Heart right ventricle (tissue), 16 donors: ENCODE measurements at regions of chr7 and their contacts with region 1.

Region 1: DNA sequence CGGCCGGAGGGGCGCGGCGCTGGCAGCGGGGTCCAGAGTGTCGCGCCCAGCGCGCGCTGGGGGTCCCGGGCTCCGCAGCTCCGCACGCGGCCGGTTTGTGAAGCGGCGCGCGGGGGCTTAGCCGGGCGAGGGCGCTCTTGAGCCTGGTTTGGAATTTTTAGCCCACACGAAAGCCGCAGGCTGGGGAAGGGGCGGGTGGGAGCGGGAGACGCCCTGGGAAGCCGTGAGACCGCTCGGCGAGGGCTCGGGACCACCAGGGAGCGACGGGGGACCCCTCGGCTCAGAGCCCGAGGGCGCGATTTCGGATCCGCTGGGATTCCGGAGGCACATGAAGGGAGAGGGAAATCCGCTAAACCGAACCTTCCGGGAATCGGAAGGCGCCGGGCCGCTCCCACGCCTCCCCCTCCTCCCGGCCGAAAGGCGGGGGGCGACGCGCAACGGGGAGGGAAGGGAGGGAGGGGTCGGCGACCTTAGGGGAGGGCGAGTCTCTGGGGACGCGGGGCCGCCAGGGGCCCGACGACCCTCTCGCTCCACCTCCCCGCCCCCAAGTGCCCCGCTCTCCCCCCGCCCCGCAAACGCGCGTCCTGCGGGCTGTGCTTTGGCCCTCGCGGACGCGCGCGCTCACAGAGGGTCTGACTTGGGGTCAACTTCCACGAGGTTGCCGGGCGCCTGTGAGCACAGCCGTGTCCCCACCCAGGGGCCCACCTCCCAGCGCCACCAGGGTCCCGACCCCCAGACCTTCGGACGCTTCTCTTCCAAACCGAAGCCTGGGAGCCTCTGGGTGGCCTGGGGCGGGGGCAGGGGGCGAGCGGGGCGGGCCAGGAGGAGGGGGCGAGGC is 5.1 kb upstream of the ELFN1 start:
- DNase-seq: peak; percentile 70 to 71
- ATAC-seq: peak; percentile 28 to 60 (median 50)
- H3K4me3 ChIP-seq: peak overlapping the region; percentile 57 to 75 (median 72)
- H3K27ac ChIP-seq: peak overlapping the region; percentile 58 to 92 (median 82)
- H3K4me1 ChIP-seq: peaks cover 18 to 55% (median 46%) of the 10 kb centered on the region in 9 donors
- H3K27me3 ChIP-seq: peaks cover 7 to 84% (median 21%) of the 10 kb centered on the region in 7 donors
- CTCF ChIP-seq: peak; percentile 37 to 88 (median 72)

Region 2: GRCh38 chr7:1742555-1743303 is 77.8 kb after region 1 on chr7:
- intact Hi-C with region 1: loop called in 3 of 10 experiments (anchors 2 to 5 kb)
- DNase-seq: peak; percentile 66 to 74
- ATAC-seq: peak in 6 of 8 donors; percentile 8 to 78 (median 62)
- H3K4me3 ChIP-seq: peak overlapping the region in 6 of 10 donors; percentile 23 to 37 (median 32)
- H3K27ac ChIP-seq: peak overlapping the region in 8 of 10 donors; percentile 10 to 56 (median 38)
- H3K4me1 ChIP-seq: peaks cover 3 to 27% (median 24%) of the 10 kb centered on the region in 9 donors
- H3K27me3 ChIP-seq: peaks cover 0 to 5% (median 0%) of the 10 kb centered on the region in 7 donors
- CTCF ChIP-seq: no peak

Region 3: DNA sequence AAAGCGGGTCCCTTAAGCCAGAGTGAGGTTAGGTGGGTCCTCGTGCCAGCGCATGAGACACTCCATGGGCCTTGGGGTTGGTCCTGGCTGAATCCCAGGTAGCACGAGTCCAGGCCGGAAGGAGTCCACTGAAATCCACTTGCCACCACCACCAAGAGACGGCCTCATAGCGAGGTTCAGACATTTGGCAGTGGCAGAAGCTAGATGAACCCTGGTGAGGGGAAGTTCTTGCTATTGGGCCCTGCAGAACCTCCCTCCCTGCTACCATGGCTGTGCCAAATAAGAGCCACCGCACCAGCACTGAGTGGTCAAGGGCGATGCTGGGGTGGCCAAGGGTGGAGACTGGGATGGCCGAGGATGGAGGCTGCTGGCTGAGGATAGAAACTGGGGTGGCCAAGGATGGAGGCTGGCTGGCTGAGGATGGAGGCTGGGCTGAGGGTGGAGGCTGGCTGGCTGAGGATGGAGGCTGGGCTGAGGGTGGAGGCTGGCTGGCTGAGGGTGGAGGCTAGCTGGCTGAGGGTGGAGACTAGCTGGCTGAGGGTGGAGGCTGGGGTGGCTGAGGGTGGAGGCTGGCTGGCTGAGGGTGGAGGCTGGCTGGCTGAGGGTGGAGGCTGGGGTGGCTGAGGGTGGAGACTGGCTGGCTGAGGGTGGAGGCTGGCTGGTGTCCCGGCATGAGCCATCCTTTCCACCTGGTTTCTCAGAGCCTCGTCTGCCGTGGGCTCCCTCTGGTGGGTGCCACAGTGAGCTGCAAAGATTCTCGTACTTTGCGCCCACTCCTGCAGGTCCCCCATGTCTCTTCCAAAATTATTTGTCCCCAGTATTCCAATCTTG is 93.3 kb after region 1 on chr7:
- intact Hi-C with region 1: loop called in 9 of 10 experiments (anchors 2 to 10 kb)
- DNase-seq: peak; percentile 46 to 56
- ATAC-seq: peak; percentile 64 to 87 (median 80)
- H3K4me3 ChIP-seq: no peak overlapping the region
- H3K27ac ChIP-seq: peak overlapping the region in 5 of 10 donors; percentile 50 to 71 (median 64)
- H3K4me1 ChIP-seq: peaks cover 0 to 13% (median 0%) of the 10 kb centered on the region in 9 donors
- H3K27me3 ChIP-seq: peaks cover 0 to 7% (median 0%) of the 10 kb centered on the region in 7 donors
- CTCF ChIP-seq: peak; percentile 23 to 60 (median 49)

Region 4: GRCh38 chr7:1767524-1767923 is 102.6 kb after region 1 on chr7:
- intact Hi-C with region 1: loop called in 1 of 10 experiments (anchors 10 kb)
- DNase-seq: no peak
- ATAC-seq: peak in 4 of 8 donors; percentile 28 to 41 (median 36)
- H3K4me3 ChIP-seq: no peak overlapping the region
- H3K27ac ChIP-seq: no peak overlapping the region
- H3K4me1 ChIP-seq: no peaks in the 10 kb centered on the region
- H3K27me3 ChIP-seq: peaks cover 0 to 2% (median 0%) of the 10 kb centered on the region in 7 donors
- CTCF ChIP-seq: peak in 6 of 9 donors; percentile 11 to 36 (median 28)

Region 5: GRCh38 chr7:2203766-2204300 is 538.9 kb after region 1 on chr7:
- intact Hi-C with region 1: loop called in 7 of 10 experiments (anchors 5 to 10 kb)
- DNase-seq: no peak
- ATAC-seq: peak in 5 of 8 donors; percentile 9 to 53 (median 30)
- H3K4me3 ChIP-seq: no peak overlapping the region
- H3K27ac ChIP-seq: no peak overlapping the region
- H3K4me1 ChIP-seq: peaks cover 0 to 15% (median 8%) of the 10 kb centered on the region in 9 donors
- H3K27me3 ChIP-seq: no peaks in the 10 kb centered on the region
- CTCF ChIP-seq: no peak

Region 6: GRCh38 chr7:2214636-2215035 is 549.7 kb after region 1 on chr7:
- intact Hi-C with region 1: loop called in 7 of 10 experiments (anchors 5 to 10 kb)
- DNase-seq: no peak
- ATAC-seq: peak in 4 of 8 donors; percentile 22 to 39 (median 24)
- H3K4me3 ChIP-seq: no peak overlapping the region
- H3K27ac ChIP-seq: peak overlapping the region in 9 of 10 donors; percentile 31 to 79 (median 72)
- H3K4me1 ChIP-seq: peaks cover 0 to 28% (median 10%) of the 10 kb centered on the region in 9 donors
- H3K27me3 ChIP-seq: no peaks in the 10 kb centered on the region
- CTCF ChIP-seq: no peak